ENCODE measurements at regions of chr1 and their contacts with region 1.

Region 1: DNA sequence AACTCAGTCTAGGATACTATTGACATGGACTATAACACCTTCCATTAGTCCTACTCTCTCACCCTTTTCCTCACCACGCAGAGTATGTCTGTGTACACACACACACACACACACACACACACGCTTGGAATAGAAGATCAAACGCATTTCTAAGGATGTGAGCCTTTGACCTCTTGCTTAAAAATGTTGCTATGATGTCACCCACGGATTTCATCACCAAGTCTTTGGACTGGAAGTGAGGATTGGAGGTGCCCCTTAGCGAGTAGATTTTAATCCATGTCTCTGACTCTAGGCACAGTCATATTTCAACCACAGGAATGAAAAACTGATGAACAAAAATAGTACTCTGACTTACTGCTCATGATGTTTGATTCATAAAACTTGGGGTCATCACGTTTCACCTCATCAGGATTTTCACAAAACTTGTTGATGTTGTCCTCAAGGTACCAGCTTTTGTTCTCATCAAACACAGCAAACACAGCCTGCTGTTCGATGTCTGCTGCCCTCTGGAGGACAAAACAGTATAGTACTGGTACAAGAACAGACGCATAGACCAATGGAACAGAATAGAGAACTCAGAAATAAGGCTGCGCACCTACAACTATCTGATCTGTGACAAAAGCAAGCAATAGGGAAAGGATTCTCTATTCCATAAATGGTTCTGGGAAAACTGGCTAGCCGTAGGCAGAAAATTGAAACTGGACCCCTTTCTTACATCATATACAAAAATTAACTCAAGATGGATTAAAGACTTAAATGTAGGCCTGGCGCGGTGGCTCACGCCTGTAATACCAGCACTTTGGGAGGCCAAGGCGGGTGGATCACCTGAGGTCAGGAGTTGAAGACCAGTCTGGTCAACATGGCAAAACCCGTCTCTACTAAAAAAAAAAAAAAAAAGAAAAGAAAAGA is 39.9 kb downstream of the F5 start:
- DNase-seq: peak; percentile 47
- H3K4me3 ChIP-seq: no peak overlapping the region
- H3K27ac ChIP-seq: no peak overlapping the region
- H3K4me1 ChIP-seq: peaks cover 0 to 10% (median 0%) of the 10 kb centered on the region in 4 donors
- H3K27me3 ChIP-seq: no peaks in the 10 kb centered on the region
- CTCF ChIP-seq: peak; percentile 72 to 87 (median 79)
- EP300 ChIP-seq: no peak
- POLR2A ChIP-seq: no peak

Region 2: DNA sequence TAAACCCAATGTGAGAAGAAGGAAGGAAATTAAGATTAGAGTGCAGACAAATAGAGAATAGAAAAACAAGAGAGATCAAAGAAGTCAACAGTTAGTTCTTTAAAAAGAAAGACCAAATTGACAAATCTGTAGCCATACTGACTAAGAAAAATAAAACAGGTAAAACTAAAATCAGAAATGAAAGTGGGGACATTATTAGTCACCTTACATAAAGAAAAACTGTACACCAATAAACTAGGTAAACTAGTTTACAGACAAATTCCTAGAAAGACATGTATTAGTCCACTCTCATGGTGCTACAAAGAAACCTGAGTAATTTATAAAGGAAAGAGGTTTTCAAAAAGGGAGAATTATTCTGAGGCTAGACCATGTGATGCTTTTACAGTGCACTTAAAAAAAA is 156.0 kb before region 1 on chr1:
- in situ Hi-C with region 1: loop called in 2 of 4 experiments (anchors 10 to 25 kb)
- intact Hi-C with region 1: no loop called
- DNase-seq: no peak
- H3K4me3 ChIP-seq: no peak overlapping the region
- H3K27ac ChIP-seq: no peak overlapping the region
- H3K4me1 ChIP-seq: peaks cover 0 to 5% (median 0%) of the 10 kb centered on the region in 4 donors
- H3K27me3 ChIP-seq: no peaks in the 10 kb centered on the region
- CTCF ChIP-seq: no peak
- EP300 ChIP-seq: no peak
- POLR2A ChIP-seq: no peak

Region 3: GRCh38 chr1:169466259-169467230 is 79.8 kb before region 1 on chr1:
- in situ Hi-C with region 1: loop called in 2 of 4 experiments (anchors 5 to 10 kb)
- intact Hi-C with region 1: loop called (anchors 5 kb)
- DNase-seq: peak; percentile 26
- H3K4me3 ChIP-seq: no peak overlapping the region
- H3K27ac ChIP-seq: no peak overlapping the region
- H3K4me1 ChIP-seq: no peaks in the 10 kb centered on the region
- H3K27me3 ChIP-seq: no peaks in the 10 kb centered on the region
- CTCF ChIP-seq: peak; percentile 38 to 47 (median 41)
- EP300 ChIP-seq: no peak
- POLR2A ChIP-seq: no peak

Region 4: GRCh38 chr1:169809370-169810095 is 263.2 kb after region 1 on chr1:
- in situ Hi-C with region 1: loop called in 2 of 4 experiments (anchors 10 kb)
- intact Hi-C with region 1: no loop called
- DNase-seq: no peak
- H3K4me3 ChIP-seq: no peak overlapping the region
- H3K27ac ChIP-seq: no peak overlapping the region
- H3K4me1 ChIP-seq: no peaks in the 10 kb centered on the region
- H3K27me3 ChIP-seq: no peaks in the 10 kb centered on the region
- CTCF ChIP-seq: peak; percentile 49 to 56 (median 54)
- EP300 ChIP-seq: no peak
- POLR2A ChIP-seq: no peak

Measured in transverse colon (tissue), 4 donors.